Activated naive CD4-positive, alpha-beta T cell treated with anti-CD3 and anti-CD28 coated beads for 36 hours (primary cell): ENCODE measurements at regions of chr16 and their contacts with region 1.

Region 1: GRCh38 chr16:79601931-79602627 is 1.5 kb upstream of the MAF start:
- DNase-seq: peak; percentile 90
- H3K4me3 Mint-ChIP-seq: peak overlapping the region; percentile 81
- H3K27ac Mint-ChIP-seq: no peak overlapping the region
- H3K4me1 Mint-ChIP-seq: peaks cover 18% of the 10 kb centered on the region
- H3K27me3 Mint-ChIP-seq: peaks cover 33% of the 10 kb centered on the region

Region 2: DNA sequence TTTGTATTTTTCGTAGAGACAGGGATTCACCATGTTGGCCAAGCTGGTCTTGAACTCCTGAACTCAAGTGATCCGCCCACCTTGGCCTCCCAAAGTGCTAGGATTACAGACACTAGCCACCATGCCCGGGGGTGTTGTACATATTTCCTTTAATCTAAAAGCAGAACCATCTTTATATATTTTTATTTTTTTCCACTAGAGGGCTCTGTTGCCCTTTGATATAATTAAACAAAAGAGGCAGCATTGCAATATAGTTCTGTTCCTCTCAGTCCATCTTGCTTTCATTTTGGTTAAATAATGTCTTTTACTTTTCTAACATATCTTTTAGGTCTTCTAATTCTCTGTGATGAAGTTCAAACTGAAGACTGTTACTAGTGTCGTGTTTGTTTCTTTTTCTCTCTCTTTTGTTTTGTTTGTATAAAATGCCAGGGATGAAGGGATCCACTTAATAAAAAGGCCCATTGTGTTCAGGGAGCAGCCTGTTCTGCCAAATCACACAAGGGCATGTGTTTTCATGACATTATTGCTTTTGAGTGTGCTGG is 1479.2 kb before region 1 on chr16:
- CTCF ChIA-PET with region 1: no interaction called
- intact Hi-C with region 1: loop called (anchors 5 kb)
- DNase-seq: peak; percentile 12
- H3K4me3 Mint-ChIP-seq: no peak overlapping the region
- H3K27ac Mint-ChIP-seq: no peak overlapping the region
- H3K4me1 Mint-ChIP-seq: peaks cover 2% of the 10 kb centered on the region
- H3K27me3 Mint-ChIP-seq: no peaks in the 10 kb centered on the region

Region 3: GRCh38 chr16:78705694-78706093 is 896.4 kb before region 1 on chr16:
- CTCF ChIA-PET with region 1: interaction called, 11 read pairs
- intact Hi-C with region 1: loop called (anchors 1 kb)
- DNase-seq: no peak
- H3K4me3 Mint-ChIP-seq: no peak overlapping the region
- H3K27ac Mint-ChIP-seq: no peak overlapping the region
- H3K4me1 Mint-ChIP-seq: peaks cover 2% of the 10 kb centered on the region
- H3K27me3 Mint-ChIP-seq: no peaks in the 10 kb centered on the region

Region 4: DNA sequence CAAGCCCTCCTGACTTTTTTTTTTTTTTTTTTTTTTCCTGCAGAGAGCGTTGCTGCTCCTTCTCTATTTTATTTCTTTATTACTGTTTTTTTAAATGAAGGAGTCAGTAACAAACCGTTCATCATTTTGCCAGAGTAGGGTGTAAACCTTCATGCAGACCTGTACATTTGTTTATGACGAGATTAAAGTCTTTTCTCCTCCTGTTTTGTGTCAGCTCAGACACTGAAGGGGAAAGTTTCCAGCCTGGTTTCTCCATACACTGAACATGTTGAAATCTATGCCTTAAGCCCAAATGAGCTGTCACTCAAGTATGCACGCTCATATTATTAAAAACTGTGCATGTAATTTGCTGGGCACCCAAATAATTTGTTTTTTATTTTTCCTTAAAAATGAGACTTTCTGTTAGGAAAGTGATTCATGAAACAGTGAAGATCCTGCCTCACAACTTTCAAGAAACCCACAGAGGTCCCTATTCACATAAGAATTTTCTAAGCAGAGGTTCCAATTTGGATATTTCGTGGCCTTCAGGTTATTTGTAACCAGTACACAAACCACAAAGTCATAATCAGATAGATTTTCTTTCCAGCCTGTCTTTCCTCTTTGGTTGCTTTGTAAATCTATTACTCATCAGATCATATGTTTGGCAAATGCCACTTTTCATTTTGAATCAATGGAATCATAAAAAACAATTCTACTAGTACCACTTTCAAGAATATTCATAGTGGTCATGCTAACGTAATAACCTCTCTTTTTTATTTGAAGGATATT is 701.9 kb before region 1 on chr16:
- CTCF ChIA-PET with region 1: no interaction called
- intact Hi-C with region 1: loop called (anchors 5 kb)
- DNase-seq: no peak
- H3K4me3 Mint-ChIP-seq: no peak overlapping the region
- H3K27ac Mint-ChIP-seq: peak overlapping the region; percentile 24
- H3K4me1 Mint-ChIP-seq: peaks cover 18% of the 10 kb centered on the region
- H3K27me3 Mint-ChIP-seq: no peaks in the 10 kb centered on the region

Region 5: GRCh38 chr16:79154086-79154485 is 448.0 kb before region 1 on chr16:
- CTCF ChIA-PET with region 1: no interaction called
- intact Hi-C with region 1: loop called (anchors 10 kb)
- DNase-seq: no peak
- H3K4me3 Mint-ChIP-seq: no peak overlapping the region
- H3K27ac Mint-ChIP-seq: no peak overlapping the region
- H3K4me1 Mint-ChIP-seq: peaks cover 24% of the 10 kb centered on the region
- H3K27me3 Mint-ChIP-seq: no peaks in the 10 kb centered on the region

Region 6: DNA sequence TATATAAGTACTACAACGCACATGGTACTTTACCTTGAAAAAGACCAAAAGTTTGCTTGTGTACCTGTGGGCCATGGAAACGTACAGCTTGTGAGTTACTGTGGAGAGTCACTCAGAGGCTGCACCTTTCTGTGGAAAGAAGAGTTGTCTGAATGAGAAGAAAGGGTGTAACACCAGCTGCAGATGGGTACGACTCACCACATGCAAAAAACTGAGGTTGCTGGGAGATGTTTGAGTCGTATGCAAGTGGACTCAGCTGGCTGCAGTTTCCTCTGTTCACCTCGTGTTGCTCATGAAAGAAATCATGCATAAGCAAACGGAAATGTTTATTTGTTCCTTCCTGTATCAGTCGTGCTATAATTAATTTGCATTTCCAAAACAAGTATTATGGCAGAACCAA is 916.4 kb after region 1 on chr16:
- CTCF ChIA-PET with region 1: no interaction called
- intact Hi-C with region 1: loop called (anchors 2 kb)
- DNase-seq: peak; percentile 71
- H3K4me3 Mint-ChIP-seq: no peak overlapping the region
- H3K27ac Mint-ChIP-seq: no peak overlapping the region
- H3K4me1 Mint-ChIP-seq: peaks cover 21% of the 10 kb centered on the region
- H3K27me3 Mint-ChIP-seq: peaks cover 20% of the 10 kb centered on the region